ENCODE measurements at regions of chr17 and their contacts with region 1.

Region 1: GRCh38 chr17:40531051-40531991 is 29.9 kb upstream of the TNS4 start:
- DNase-seq: peak; percentile 71
- ATAC-seq: peak; percentile 74
- H3K4me3 ChIP-seq: no peak overlapping the region
- H3K27ac ChIP-seq: peak overlapping the region; percentile 60; the same call in 1 of the 2 replicates
- H3K4me1 ChIP-seq: peaks cover 38% of the 10 kb centered on the region
- H3K27me3 ChIP-seq: no peaks in the 10 kb centered on the region
- CTCF ChIP-seq: no peak
- EP300 ChIP-seq: peak; percentile 6 to 14; a peak in 1 of 4 replicates
- POLR2A ChIP-seq: no peak
- RAD21 ChIP-seq: no peak

Region 2: DNA sequence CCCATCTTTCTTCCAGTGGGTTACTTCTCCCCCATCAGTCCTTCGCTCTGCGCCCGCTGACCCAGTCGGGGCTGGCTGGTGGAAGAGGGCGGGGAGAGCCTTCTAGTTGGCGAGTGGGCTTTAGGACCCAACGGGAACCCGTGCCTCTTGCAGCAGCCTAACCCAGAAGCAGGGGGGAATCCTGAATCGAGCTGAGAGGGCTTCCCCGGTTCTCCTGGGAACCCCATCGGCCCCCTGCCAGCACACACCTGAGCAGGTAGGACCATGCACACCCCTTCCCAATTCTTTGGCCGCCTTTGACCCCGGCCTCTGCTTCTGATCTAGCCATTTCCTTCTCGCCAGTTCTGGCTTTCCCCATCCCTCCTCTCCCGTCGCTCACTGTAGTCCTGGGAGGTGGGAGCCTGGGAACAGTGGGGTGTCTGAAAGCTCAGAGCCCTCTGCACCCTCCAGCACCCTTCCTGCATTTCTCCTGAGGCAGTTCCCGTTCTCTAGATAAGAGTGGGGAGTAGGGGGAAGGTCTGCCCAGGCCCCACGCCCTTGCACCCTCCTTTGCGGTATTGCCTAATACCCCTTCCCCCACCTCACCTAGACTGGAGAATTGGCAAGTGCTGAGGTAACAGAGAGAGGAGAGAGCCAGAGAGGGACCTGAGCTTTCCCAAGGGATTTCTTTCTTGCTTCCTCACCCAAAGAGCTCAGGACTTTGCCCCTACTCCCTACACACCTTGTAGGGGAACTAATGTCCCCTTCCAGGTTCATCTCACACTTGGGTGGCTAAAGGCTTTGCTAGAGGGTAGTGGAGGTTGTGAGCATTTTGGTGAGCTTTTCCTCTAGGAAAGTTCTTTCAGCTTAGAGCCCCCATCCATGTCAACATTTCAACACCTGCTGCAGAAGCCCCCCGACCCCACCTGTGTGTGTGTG is 222.0 kb before region 1 on chr17 and contains the start of gene RARA:
- CTCF ChIA-PET with region 1: interaction called, 23 read pairs
- POLR2A ChIA-PET with region 1: interaction called, 8 read pairs
- RAD21 ChIA-PET with region 1: interaction called, 9 read pairs
- SMC1A ChIA-PET with region 1: interaction called, 7 read pairs
- in situ Hi-C with region 1: loop called (anchors 5 kb)
- intact Hi-C with region 1: loop called (anchors 5 kb)
- DNase-seq: no peak
- ATAC-seq: peak; percentile 68
- H3K4me3 ChIP-seq: peak within 1 kb of the TSS; percentile 70
- H3K27ac ChIP-seq: peak within 1 kb of the TSS; percentile 9; the same call in 1 of the 2 replicates
- H3K4me1 ChIP-seq: peaks cover 58% of the 10 kb centered on the region
- H3K27me3 ChIP-seq: no peaks in the 10 kb centered on the region
- CTCF ChIP-seq: no peak
- EP300 ChIP-seq: no peak
- POLR2A ChIP-seq: no peak
- RAD21 ChIP-seq: no peak
- polyA plus RNA-seq, gene RARA: 0.13 to 0.16 TPM

Region 3: DNA sequence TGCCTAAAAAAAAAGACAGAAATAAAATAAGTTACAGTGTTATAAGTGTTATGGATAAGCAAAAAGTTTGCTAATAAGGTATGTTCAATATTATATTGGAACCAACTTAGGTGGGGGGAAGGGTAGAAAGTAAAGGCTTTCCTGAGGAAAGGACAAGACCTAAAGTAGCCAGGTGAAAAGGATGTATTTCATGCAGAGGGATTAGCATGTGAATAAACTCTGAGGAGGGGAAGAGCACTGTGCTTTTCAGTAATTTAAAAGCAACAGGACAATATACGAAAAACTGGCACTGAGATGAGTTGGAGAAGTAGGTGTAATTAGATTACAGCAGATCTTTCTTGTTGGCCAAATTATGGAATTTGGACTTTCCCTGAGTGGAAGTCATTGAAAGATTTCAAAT is 121.2 kb before region 1 on chr17:
- CTCF ChIA-PET with region 1: interaction called, 86 read pairs
- POLR2A ChIA-PET with region 1: interaction called, 6 read pairs
- RAD21 ChIA-PET with region 1: interaction called, 88 read pairs
- SMC1A ChIA-PET with region 1: interaction called, 106 read pairs
- in situ Hi-C with region 1: no loop called
- intact Hi-C with region 1: no loop called
- DNase-seq: no peak
- ATAC-seq: no peak
- H3K4me3 ChIP-seq: no peak overlapping the region
- H3K27ac ChIP-seq: no peak overlapping the region
- H3K4me1 ChIP-seq: no peaks in the 10 kb centered on the region
- H3K27me3 ChIP-seq: no peaks in the 10 kb centered on the region
- CTCF ChIP-seq: no peak
- EP300 ChIP-seq: no peak
- POLR2A ChIP-seq: no peak
- RAD21 ChIP-seq: no peak

Region 4: GRCh38 chr17:40443583-40444327 is 87.6 kb before region 1 on chr17:
- CTCF ChIA-PET with region 1: interaction called, 289 read pairs
- POLR2A ChIA-PET with region 1: interaction called, 9 read pairs
- RAD21 ChIA-PET with region 1: interaction called, 175 read pairs
- SMC1A ChIA-PET with region 1: interaction called, 68 read pairs
- in situ Hi-C with region 1: loop called (anchors 25 kb)
- intact Hi-C with region 1: loop called (anchors 1 kb)
- DNase-seq: no peak
- ATAC-seq: peak; percentile 84
- H3K4me3 ChIP-seq: peak overlapping the region; percentile 61
- H3K27ac ChIP-seq: no peak overlapping the region
- H3K4me1 ChIP-seq: peaks cover 19% of the 10 kb centered on the region
- H3K27me3 ChIP-seq: peaks cover 0 to 16% of the 10 kb centered on the region in 2 experiments; a peak in 1 of 4 replicates
- CTCF ChIP-seq: peak; percentile 46 to 72 (median 71)
- EP300 ChIP-seq: no peak
- POLR2A ChIP-seq: no peak
- RAD21 ChIP-seq: peak; percentile 33; the same call in 1 of the 2 replicates

Region 5: DNA sequence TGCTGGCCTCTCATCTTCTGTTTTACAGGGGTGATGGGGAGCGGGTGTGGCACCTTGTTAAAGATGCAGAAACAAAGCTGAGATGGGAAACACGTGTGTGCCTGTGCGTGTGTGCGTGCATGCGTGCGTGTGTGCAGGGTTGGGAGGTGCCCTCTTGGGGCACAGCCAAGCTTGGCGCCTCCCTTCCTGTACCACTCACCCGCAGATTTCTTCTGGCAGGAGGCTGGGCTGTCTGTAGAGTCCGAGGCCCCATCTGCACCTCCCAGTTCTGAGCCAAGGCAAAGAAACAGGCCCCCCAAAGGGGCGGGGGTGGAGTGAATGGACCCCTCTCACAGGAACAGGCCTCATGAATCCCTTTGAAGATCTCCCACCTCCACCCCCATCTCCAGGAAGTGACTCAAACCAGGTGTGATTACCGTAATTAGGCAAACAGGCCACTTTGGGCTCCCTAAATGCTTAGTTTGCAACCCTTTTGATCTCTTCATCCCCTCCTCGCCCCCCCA is 50.8 kb before region 1 on chr17:
- CTCF ChIA-PET with region 1: interaction called, 128 read pairs
- POLR2A ChIA-PET with region 1: interaction called, 12 read pairs
- RAD21 ChIA-PET with region 1: interaction called, 131 read pairs
- SMC1A ChIA-PET with region 1: interaction called, 108 read pairs
- in situ Hi-C with region 1: no loop called
- intact Hi-C with region 1: loop called (anchors 1 kb)
- DNase-seq: peak; percentile 8
- ATAC-seq: peak; percentile 81
- H3K4me3 ChIP-seq: no peak overlapping the region
- H3K27ac ChIP-seq: no peak overlapping the region
- H3K4me1 ChIP-seq: peaks cover 15% of the 10 kb centered on the region
- H3K27me3 ChIP-seq: no peaks in the 10 kb centered on the region
- CTCF ChIP-seq: no peak
- EP300 ChIP-seq: peak in 1 of 2 experiments; percentile 65; a peak in 1 of 4 replicates
- POLR2A ChIP-seq: no peak
- RAD21 ChIP-seq: no peak

Region 6: GRCh38 chr17:40542558-40543411 is 11.5 kb after region 1 on chr17:
- CTCF ChIA-PET with region 1: interaction called, 138 read pairs
- POLR2A ChIA-PET with region 1: interaction called, 28 read pairs
- RAD21 ChIA-PET with region 1: interaction called, 514 read pairs
- SMC1A ChIA-PET with region 1: interaction called, 430 read pairs
- in situ Hi-C with region 1: no loop called
- intact Hi-C with region 1: no loop called
- DNase-seq: no peak
- ATAC-seq: peak; percentile 67
- H3K4me3 ChIP-seq: no peak overlapping the region
- H3K27ac ChIP-seq: peak overlapping the region; percentile 30
- H3K4me1 ChIP-seq: peaks cover 56% of the 10 kb centered on the region
- H3K27me3 ChIP-seq: no peaks in the 10 kb centered on the region; a peak in 1 of 4 replicates
- CTCF ChIP-seq: no peak
- EP300 ChIP-seq: peak; percentile 33 to 73; a peak in 3 of 4 replicates
- POLR2A ChIP-seq: peak; percentile 40; the same call in 1 of the 2 replicates
- RAD21 ChIP-seq: no peak

Region 7: GRCh38 chr17:40622509-40622928 is 91.2 kb after region 1 on chr17:
- CTCF ChIA-PET with region 1: interaction called, 193 read pairs
- POLR2A ChIA-PET with region 1: interaction called, 4 read pairs
- RAD21 ChIA-PET with region 1: interaction called, 9 read pairs
- SMC1A ChIA-PET with region 1: interaction called, 175 read pairs
- in situ Hi-C with region 1: no loop called
- intact Hi-C with region 1: no loop called
- DNase-seq: no peak
- ATAC-seq: peak; percentile 29; the same call in 2 of the 3 replicates
- H3K4me3 ChIP-seq: no peak overlapping the region
- H3K27ac ChIP-seq: no peak overlapping the region
- H3K4me1 ChIP-seq: peaks cover 27% of the 10 kb centered on the region
- H3K27me3 ChIP-seq: no peaks in the 10 kb centered on the region
- CTCF ChIP-seq: no peak
- EP300 ChIP-seq: no peak
- POLR2A ChIP-seq: no peak
- RAD21 ChIP-seq: no peak

Region 8: DNA sequence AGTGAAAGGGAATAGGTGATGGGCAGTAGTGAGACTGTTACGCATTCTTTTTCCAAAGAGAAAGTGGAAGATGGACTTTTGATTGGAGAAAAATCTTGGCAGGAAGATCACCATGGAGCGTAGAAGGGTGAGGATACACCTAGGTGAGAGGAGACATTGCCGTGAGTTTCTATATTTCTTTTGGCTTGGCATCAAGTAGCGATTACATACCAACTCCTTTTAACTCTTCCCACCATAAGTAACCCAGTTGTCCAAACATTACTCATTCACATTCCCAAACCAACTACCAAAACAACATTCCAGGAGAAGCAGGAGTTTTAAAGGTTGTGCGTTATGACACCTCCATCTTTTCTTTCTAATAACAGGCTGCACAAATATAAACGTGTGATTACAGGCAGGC is 279.2 kb after region 1 on chr17:
- CTCF ChIA-PET with region 1: no interaction called
- POLR2A ChIA-PET with region 1: no interaction called
- RAD21 ChIA-PET with region 1: no interaction called
- SMC1A ChIA-PET with region 1: no interaction called
- in situ Hi-C with region 1: no loop called
- intact Hi-C with region 1: no loop called
- DNase-seq: no peak
- ATAC-seq: no peak
- H3K4me3 ChIP-seq: no peak overlapping the region
- H3K27ac ChIP-seq: no peak overlapping the region
- H3K4me1 ChIP-seq: no peaks in the 10 kb centered on the region
- H3K27me3 ChIP-seq: peaks cover 4 to 6% of the 10 kb centered on the region in 2 experiments
- CTCF ChIP-seq: no peak
- EP300 ChIP-seq: no peak
- POLR2A ChIP-seq: no peak
- RAD21 ChIP-seq: no peak

Measured in GM12878 (cell line).